B cell (primary cell): ENCODE measurements at regions of chr12 and their contacts with region 1.

Region 1: GRCh38 chr12:118237052-118237665 is 101.2 kb downstream of the PEBP1 start:
- DNase-seq: peak; percentile 76
- ATAC-seq: peak; percentile 92
- H3K4me3 ChIP-seq: peak overlapping the region in 1 of 5 experiments; percentile 16
- H3K4me3 Mint-ChIP-seq: peak overlapping the region; percentile 75
- H3K27ac ChIP-seq: peak overlapping the region; percentile 21 to 67
- H3K27ac Mint-ChIP-seq: peak overlapping the region; percentile 90
- H3K4me1 ChIP-seq: peaks cover 36 to 37% of the 10 kb centered on the region in 2 donors
- H3K4me1 Mint-ChIP-seq: peaks cover 39% of the 10 kb centered on the region
- H3K27me3 ChIP-seq: no peaks in the 10 kb centered on the region
- H3K27me3 Mint-ChIP-seq: no peaks in the 10 kb centered on the region
- CTCF ChIP-seq: no peak

Region 2: DNA sequence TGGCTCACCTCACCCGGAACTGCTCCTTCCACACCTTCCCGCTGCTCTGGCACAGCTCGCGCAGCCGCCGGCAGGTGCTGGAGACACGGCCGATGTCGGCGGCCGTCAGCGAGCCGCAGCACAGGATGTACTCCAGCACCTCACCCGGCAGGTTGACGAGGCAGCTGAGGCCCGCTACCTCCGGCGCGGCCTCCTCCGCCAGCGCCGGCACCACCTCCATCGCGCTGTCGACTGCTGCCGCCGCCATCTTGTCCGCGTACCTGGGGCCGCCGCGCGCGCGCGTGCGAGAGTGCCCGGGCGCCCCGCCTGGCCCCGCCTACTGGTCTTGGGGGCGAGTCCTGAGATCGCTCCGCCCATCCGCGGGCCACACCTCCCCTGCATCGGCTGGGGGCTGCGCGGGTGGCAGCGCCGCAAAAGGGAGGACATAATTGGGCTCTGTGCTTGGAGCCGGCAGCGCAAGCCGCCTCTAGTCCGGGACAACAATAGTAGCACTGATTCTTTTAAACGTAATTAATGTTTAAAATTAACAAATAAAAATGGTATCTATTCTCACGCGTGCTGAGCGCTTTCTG is 1046.9 kb before region 1 on chr12 and contains the start of gene FBXO21:
- CTCF ChIA-PET with region 1: no interaction called
- POLR2A ChIA-PET with region 1: no interaction called
- intact Hi-C with region 1: loop called (anchors 5 kb)
- DNase-seq: peak; percentile 94
- ATAC-seq: peak; percentile 98
- H3K4me3 ChIP-seq: peak within 1 kb of the TSS; percentile 42 to 87 (median 82)
- H3K4me3 Mint-ChIP-seq: peak within 1 kb of the TSS; percentile 93
- H3K27ac ChIP-seq: peak within 1 kb of the TSS; percentile 66
- H3K27ac Mint-ChIP-seq: peak within 1 kb of the TSS; percentile 97
- H3K4me1 ChIP-seq: peaks cover 13 to 18% of the 10 kb centered on the region in 2 donors
- H3K4me1 Mint-ChIP-seq: peaks cover 25% of the 10 kb centered on the region
- H3K27me3 ChIP-seq: peaks cover 0 to 8% (median 3%) of the 10 kb centered on the region in 4 experiments
- H3K27me3 Mint-ChIP-seq: peaks cover 10% of the 10 kb centered on the region
- CTCF ChIP-seq: no peak
- total RNA-seq, gene FBXO21: 55.7 and 59.9 TPM in 2 replicates

Region 3: DNA sequence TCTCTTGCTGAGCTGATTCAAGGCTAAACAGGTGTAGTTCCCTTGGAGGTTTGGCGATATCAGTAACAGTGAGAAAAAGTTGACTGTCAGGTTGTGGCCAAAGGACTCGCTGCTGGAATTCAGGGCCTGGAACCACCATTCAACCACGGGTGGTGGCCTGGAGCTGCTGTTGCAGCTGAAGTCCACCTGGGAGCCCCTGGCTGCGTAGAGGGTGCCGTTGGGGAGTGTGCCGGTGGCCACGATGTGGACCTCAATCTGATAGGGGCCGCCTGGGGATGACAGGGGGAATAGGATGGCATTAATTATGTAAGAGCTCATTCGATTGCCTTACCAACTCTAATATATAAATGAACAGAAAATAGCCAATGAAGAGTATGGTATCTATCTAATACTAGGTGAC is 155.0 kb before region 1 on chr12:
- CTCF ChIA-PET with region 1: no interaction called
- POLR2A ChIA-PET with region 1: no interaction called
- intact Hi-C with region 1: no loop called
- DNase-seq: no peak
- ATAC-seq: no peak
- H3K4me3 ChIP-seq: no peak overlapping the region
- H3K4me3 Mint-ChIP-seq: no peak overlapping the region
- H3K27ac ChIP-seq: no peak overlapping the region
- H3K27ac Mint-ChIP-seq: no peak overlapping the region
- H3K4me1 ChIP-seq: no peaks in the 10 kb centered on the region
- H3K4me1 Mint-ChIP-seq: no peaks in the 10 kb centered on the region
- H3K27me3 ChIP-seq: no peaks in the 10 kb centered on the region
- H3K27me3 Mint-ChIP-seq: no peaks in the 10 kb centered on the region
- CTCF ChIP-seq: no peak

Region 4: DNA sequence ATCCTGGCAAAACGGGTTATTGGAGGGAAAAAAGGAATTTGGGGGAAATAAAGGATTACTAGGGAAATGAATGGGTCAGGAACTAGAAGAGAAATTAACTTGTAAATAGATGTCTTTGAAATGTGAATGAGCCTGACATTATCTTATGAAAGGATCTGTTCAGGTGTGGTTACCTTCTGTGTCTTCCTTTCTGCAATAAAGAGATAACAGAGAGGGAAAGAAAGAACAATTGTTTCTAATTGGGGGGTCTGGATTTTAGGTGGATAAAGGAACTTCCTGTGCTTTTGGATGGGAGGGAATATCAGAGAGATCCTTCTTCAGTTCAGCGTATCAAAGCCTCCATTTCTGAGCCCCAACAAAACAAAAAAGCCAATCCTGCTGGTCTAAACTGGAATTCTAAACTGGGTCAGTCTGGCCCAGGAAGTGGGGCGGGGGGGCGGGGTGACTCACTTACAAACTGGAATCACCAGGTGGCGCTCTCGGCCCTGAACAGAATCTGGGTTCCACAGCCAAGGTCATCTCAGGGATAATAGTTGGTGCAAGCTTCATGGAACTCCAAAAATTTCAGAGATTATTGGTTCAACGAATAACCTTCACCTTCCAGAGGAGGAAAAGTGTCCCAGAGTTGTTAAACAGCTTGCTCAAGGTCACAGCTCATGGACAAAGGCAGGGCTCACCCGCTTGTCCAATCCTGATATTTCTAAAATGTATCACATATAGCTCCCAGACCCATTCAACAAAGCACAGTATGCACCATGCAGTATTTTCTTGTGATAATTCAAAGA is 116.4 kb before region 1 on chr12:
- CTCF ChIA-PET with region 1: no interaction called
- POLR2A ChIA-PET with region 1: no interaction called
- intact Hi-C with region 1: no loop called
- DNase-seq: peak; percentile 61
- ATAC-seq: peak; percentile 75
- H3K4me3 ChIP-seq: no peak overlapping the region
- H3K4me3 Mint-ChIP-seq: no peak overlapping the region
- H3K27ac ChIP-seq: no peak overlapping the region
- H3K27ac Mint-ChIP-seq: peak overlapping the region; percentile 26
- H3K4me1 ChIP-seq: no peaks in the 10 kb centered on the region
- H3K4me1 Mint-ChIP-seq: peaks cover 4% of the 10 kb centered on the region
- H3K27me3 ChIP-seq: no peaks in the 10 kb centered on the region
- H3K27me3 Mint-ChIP-seq: no peaks in the 10 kb centered on the region
- CTCF ChIP-seq: peak; percentile 88

Region 5: GRCh38 chr12:118189741-118190191 is 47.4 kb before region 1 on chr12:
- CTCF ChIA-PET with region 1: no interaction called
- POLR2A ChIA-PET with region 1: no interaction called
- intact Hi-C with region 1: loop called (anchors 10 kb)
- DNase-seq: no peak
- ATAC-seq: no peak
- H3K4me3 ChIP-seq: no peak overlapping the region
- H3K4me3 Mint-ChIP-seq: no peak overlapping the region
- H3K27ac ChIP-seq: no peak overlapping the region
- H3K27ac Mint-ChIP-seq: no peak overlapping the region
- H3K4me1 ChIP-seq: no peaks in the 10 kb centered on the region
- H3K4me1 Mint-ChIP-seq: peaks cover 7% of the 10 kb centered on the region
- H3K27me3 ChIP-seq: no peaks in the 10 kb centered on the region
- H3K27me3 Mint-ChIP-seq: no peaks in the 10 kb centered on the region
- CTCF ChIP-seq: no peak

Region 6: DNA sequence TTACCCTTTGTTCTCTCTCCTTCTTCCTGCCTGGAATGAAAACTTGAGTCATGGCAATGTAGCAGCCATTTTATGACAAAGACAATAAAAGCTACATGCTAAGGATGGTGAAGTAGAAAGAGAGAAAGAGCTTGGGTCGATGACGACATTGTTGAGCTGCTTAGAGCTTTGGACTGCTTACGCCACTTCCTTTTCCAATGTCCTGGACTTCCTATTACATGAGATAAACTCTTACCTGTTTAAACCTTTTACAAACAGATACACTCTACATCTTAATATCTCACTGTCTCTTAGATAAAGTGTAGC is 31.1 kb before region 1 on chr12:
- CTCF ChIA-PET with region 1: no interaction called
- POLR2A ChIA-PET with region 1: no interaction called
- intact Hi-C with region 1: no loop called
- DNase-seq: no peak
- ATAC-seq: no peak
- H3K4me3 ChIP-seq: no peak overlapping the region
- H3K4me3 Mint-ChIP-seq: no peak overlapping the region
- H3K27ac ChIP-seq: peak overlapping the region in 1 of 2 donors; percentile 21
- H3K27ac Mint-ChIP-seq: peak overlapping the region; percentile 15
- H3K4me1 ChIP-seq: no peaks in the 10 kb centered on the region
- H3K4me1 Mint-ChIP-seq: peaks cover 2% of the 10 kb centered on the region
- H3K27me3 ChIP-seq: no peaks in the 10 kb centered on the region
- H3K27me3 Mint-ChIP-seq: no peaks in the 10 kb centered on the region
- CTCF ChIP-seq: no peak

Region 7: GRCh38 chr12:118513611-118514010 is 276.5 kb after region 1 on chr12:
- CTCF ChIA-PET with region 1: no interaction called
- POLR2A ChIA-PET with region 1: no interaction called
- intact Hi-C with region 1: no loop called
- DNase-seq: no peak
- ATAC-seq: no peak
- H3K4me3 ChIP-seq: no peak overlapping the region
- H3K4me3 Mint-ChIP-seq: no peak overlapping the region
- H3K27ac ChIP-seq: no peak overlapping the region
- H3K27ac Mint-ChIP-seq: no peak overlapping the region
- H3K4me1 ChIP-seq: no peaks in the 10 kb centered on the region
- H3K4me1 Mint-ChIP-seq: no peaks in the 10 kb centered on the region
- H3K27me3 ChIP-seq: no peaks in the 10 kb centered on the region
- H3K27me3 Mint-ChIP-seq: peaks cover 3% of the 10 kb centered on the region
- CTCF ChIP-seq: no peak